Ascending aorta (tissue), 2 donors: ENCODE measurements at regions of chr11 and their contacts with region 1.

Region 1: DNA sequence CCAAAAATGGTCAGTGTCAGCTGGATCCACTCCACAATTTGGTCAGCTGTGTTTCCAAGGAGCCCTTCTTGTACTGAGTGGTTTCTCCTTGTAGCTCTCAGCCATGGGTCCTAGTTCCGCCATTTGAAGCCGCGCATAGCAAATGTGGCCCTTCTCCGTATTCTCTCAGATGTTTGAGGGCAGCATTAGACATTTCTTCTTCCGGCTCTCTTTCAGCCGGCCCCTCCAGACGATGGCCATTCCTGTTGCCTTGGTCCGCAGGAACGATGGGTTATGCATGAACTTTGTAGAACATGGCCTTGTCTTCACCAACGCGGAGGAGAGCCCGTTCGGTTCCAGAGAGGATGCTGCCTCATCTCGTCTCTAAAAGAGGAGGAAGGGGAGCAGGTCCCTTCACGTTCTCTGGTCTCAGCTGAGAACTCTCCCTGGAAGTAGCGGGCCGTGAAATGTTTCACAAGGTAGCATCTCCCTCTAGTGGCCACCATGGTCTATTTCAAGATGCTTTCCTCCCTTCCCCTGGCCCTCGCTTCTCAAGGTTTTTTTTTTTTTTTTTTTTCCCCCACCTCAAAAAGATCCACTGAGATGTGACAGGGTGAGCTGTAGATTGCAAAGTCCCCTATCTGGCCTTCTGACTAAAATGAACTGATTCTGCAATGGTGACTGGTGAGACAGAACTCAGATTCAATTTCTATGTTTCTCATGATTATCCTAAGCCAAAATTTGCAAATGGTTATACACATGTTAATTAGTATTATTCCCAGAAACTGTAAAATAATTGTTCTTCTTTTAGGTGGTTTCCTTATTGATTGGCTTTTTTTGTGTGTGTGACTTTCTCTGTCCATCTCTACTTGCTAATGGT is 19.8 kb upstream of the PLET1 start:
- DNase-seq: peak in 1 of 2 donors; percentile 83
- H3K4me3 ChIP-seq: peak overlapping the region; percentile 54 to 70
- H3K27ac ChIP-seq: peak overlapping the region; percentile 22 to 37
- H3K4me1 ChIP-seq: peaks cover 0 to 3% of the 10 kb centered on the region in 2 donors
- H3K27me3 ChIP-seq: no peaks in the 10 kb centered on the region
- CTCF ChIP-seq: peak; percentile 58 to 72 (median 64)

Region 2: DNA sequence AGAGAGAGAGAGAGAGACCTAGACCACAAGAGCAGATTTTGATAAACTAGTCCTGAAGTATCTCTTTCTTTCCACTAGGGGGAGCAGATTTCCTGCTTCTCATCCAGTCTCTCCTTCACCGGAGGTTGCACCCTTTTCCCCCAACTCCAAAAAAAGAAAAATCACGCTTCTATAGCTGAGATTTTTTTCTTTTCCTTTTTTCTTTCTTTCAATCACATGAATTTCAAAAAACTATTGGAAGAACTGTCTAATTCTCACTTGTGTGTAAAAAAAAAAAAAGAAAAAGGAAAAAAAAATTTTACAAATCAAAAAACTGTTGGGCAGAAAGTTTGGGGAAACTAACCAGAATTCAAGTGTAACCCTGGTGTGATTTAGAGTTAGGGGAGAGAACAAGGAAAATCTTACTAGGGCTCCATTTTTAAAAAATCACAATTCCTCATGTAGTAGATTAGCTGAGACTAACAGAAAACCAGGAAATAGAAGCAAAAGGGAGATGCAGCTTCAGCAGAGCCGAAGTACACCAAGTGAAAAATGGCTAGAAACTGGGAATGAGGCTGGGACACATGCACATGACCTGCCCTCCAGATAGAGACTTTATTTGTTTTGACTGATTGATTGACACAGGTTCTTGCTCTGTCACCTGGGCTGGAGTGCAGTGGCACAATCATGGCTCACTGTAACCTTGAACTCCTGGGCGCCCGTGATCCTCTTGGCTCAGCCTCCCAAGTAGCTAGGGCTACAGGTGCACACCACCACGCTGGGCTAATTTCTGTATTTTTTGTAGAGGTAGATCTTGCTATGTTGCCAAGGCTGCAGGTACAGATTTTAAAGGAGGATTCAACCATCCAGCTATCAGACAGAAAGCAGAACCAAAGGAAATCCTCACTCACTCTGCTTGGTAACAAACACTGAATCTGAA is 166.7 kb before region 1 on chr11:
- intact Hi-C with region 1: loop called (anchors 5 kb)
- DNase-seq: no peak
- H3K4me3 ChIP-seq: peak overlapping the region in 1 of 2 donors; percentile 25
- H3K27ac ChIP-seq: no peak overlapping the region
- H3K4me1 ChIP-seq: peaks cover 0 to 4% of the 10 kb centered on the region in 2 donors
- H3K27me3 ChIP-seq: no peaks in the 10 kb centered on the region
- CTCF ChIP-seq: peak; percentile 56 to 66 (median 56)

Region 3: GRCh38 chr11:112219476-112220232 is 60.8 kb before region 1 on chr11:
- intact Hi-C with region 1: loop called (anchors 1 kb)
- DNase-seq: peak in 1 of 2 donors; percentile 70
- H3K4me3 ChIP-seq: no peak overlapping the region
- H3K27ac ChIP-seq: no peak overlapping the region
- H3K4me1 ChIP-seq: peaks cover 0 to 2% of the 10 kb centered on the region in 2 donors
- H3K27me3 ChIP-seq: no peaks in the 10 kb centered on the region
- CTCF ChIP-seq: peak; percentile 73 to 85 (median 80)

Region 4: GRCh38 chr11:112255067-112255720 is 25.3 kb before region 1 on chr11:
- intact Hi-C with region 1: no loop called
- DNase-seq: no peak
- H3K4me3 ChIP-seq: no peak overlapping the region
- H3K27ac ChIP-seq: no peak overlapping the region
- H3K4me1 ChIP-seq: no peaks in the 10 kb centered on the region
- H3K27me3 ChIP-seq: no peaks in the 10 kb centered on the region
- CTCF ChIP-seq: no peak